GM12878 (cell line): ENCODE measurements at regions of chr4 and their contacts with region 1.

Region 1: GRCh38 chr4:2862528-2862927 is 18.9 kb downstream of the ADD1 start:
- DNase-seq: no peak
- ATAC-seq: peak; percentile 11; the same call in 2 of the 3 replicates
- H3K4me3 ChIP-seq: 0 out of 2 replicates have a peak overlapping the region, but pooled peaks have one; percentile 5
- H3K27ac ChIP-seq: peak overlapping the region; percentile 10; the same call in 1 of the 2 replicates
- H3K4me1 ChIP-seq: peaks cover 34% of the 10 kb centered on the region
- H3K27me3 ChIP-seq: no peaks in the 10 kb centered on the region
- CTCF ChIP-seq: no peak
- EP300 ChIP-seq: no peak
- POLR2A ChIP-seq: no peak
- RAD21 ChIP-seq: no peak

Region 2: GRCh38 chr4:2637956-2638552 is 224.5 kb before region 1 on chr4:
- CTCF ChIA-PET with region 1: no interaction called
- POLR2A ChIA-PET with region 1: no interaction called
- RAD21 ChIA-PET with region 1: no interaction called
- SMC1A ChIA-PET with region 1: no interaction called
- in situ Hi-C with region 1: no loop called
- intact Hi-C with region 1: no loop called
- DNase-seq: no peak
- ATAC-seq: no peak
- H3K4me3 ChIP-seq: no peak overlapping the region
- H3K27ac ChIP-seq: no peak overlapping the region
- H3K4me1 ChIP-seq: no peaks in the 10 kb centered on the region
- H3K27me3 ChIP-seq: no peaks in the 10 kb centered on the region
- CTCF ChIP-seq: no peak
- EP300 ChIP-seq: no peak
- POLR2A ChIP-seq: no peak
- RAD21 ChIP-seq: no peak

Region 3: GRCh38 chr4:2843263-2843940 is 19.1 kb before region 1 on chr4 and contains the start of gene ADD1:
- CTCF ChIA-PET with region 1: interaction called, 10 read pairs
- POLR2A ChIA-PET with region 1: interaction called, 7 read pairs
- RAD21 ChIA-PET with region 1: interaction called, 3 read pairs
- SMC1A ChIA-PET with region 1: interaction called, 49 read pairs
- in situ Hi-C with region 1: no loop called
- intact Hi-C with region 1: no loop called
- DNase-seq: peak; percentile 94
- ATAC-seq: peak; percentile 90
- H3K4me3 ChIP-seq: peak within 1 kb of the TSS; percentile 81
- H3K27ac ChIP-seq: peak within 1 kb of the TSS; percentile 78
- H3K4me1 ChIP-seq: peaks cover 24% of the 10 kb centered on the region
- H3K27me3 ChIP-seq: no peaks in the 10 kb centered on the region
- CTCF ChIP-seq: no peak
- EP300 ChIP-seq: no peak
- POLR2A ChIP-seq: peak; percentile 96
- RAD21 ChIP-seq: no peak
- polyA plus RNA-seq, gene ADD1: 21.6 to 50.2 TPM

Region 4: GRCh38 chr4:2852481-2852921 is 10.0 kb before region 1 on chr4:
- CTCF ChIA-PET with region 1: interaction called, 23 read pairs
- POLR2A ChIA-PET with region 1: interaction called, 7 read pairs
- RAD21 ChIA-PET with region 1: interaction called, 22 read pairs
- SMC1A ChIA-PET with region 1: interaction called, 49 read pairs
- in situ Hi-C with region 1: no loop called
- intact Hi-C with region 1: no loop called
- DNase-seq: peak; percentile 59
- ATAC-seq: peak; percentile 67
- H3K4me3 ChIP-seq: peak overlapping the region; percentile 65
- H3K27ac ChIP-seq: peak overlapping the region; percentile 60
- H3K4me1 ChIP-seq: peaks cover 50% of the 10 kb centered on the region
- H3K27me3 ChIP-seq: no peaks in the 10 kb centered on the region
- CTCF ChIP-seq: no peak
- EP300 ChIP-seq: no peak
- POLR2A ChIP-seq: no peak
- RAD21 ChIP-seq: no peak

Region 5: DNA sequence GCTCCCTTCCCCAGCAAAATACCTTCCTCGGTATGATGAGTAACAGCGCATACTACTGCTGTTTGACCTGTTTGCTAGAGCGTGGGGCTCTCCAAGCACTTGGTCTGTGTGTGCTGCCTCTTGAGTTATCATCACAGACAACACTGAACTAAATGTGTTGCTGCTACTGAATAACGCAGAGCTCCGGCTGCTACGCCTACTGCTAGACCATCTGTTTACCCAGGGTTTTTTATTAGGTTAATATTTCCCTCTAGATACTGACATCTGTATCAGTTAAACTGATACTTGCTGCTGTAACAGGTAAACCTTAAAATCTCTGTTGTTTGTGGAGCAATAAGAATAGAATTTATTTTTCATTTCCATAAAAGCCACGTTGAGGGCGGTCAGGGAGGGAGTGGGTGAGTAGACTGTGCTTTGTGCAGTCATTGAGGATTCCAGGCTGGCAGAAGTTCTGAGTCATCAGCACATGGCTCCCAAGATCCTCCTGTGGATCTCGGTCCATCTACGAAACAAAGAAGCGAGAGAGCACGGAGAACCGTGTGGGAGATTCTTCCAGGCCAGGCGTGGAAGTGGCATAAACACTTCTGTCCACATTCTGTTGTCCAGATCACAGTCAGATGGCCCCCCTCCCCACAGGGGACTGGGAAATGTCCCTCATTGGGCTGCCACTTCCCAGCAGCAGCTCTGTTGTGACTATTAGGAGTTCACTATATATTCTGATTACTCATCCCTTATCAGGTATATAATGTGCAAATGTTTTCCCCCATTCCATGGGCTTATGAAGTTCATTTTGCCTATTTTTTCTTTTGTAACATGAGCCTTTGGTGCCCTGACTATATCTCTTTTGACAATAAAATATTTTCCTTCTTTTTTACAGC is 114.9 kb after region 1 on chr4:
- CTCF ChIA-PET with region 1: no interaction called
- POLR2A ChIA-PET with region 1: no interaction called
- RAD21 ChIA-PET with region 1: no interaction called
- SMC1A ChIA-PET with region 1: no interaction called
- in situ Hi-C with region 1: no loop called
- intact Hi-C with region 1: no loop called
- DNase-seq: no peak
- ATAC-seq: no peak
- H3K4me3 ChIP-seq: no peak overlapping the region
- H3K27ac ChIP-seq: no peak overlapping the region
- H3K4me1 ChIP-seq: no peaks in the 10 kb centered on the region
- H3K27me3 ChIP-seq: no peaks in the 10 kb centered on the region
- CTCF ChIP-seq: no peak
- EP300 ChIP-seq: no peak
- POLR2A ChIP-seq: no peak
- RAD21 ChIP-seq: no peak